ENCODE measurements at regions of chr2 and their contacts with region 1.

Region 1: GRCh38 chr2:59910166-59910565 is 643.3 kb downstream of the BCL11A start:
- DNase-seq: no peak
- ATAC-seq: no peak
- H3K4me3 ChIP-seq: no peak overlapping the region
- H3K4me3 Mint-ChIP-seq: peak overlapping the region in 2 of 10 donors; percentile 0 to 10
- H3K27ac ChIP-seq: no peak overlapping the region
- H3K27ac Mint-ChIP-seq: peak overlapping the region in 3 of 9 donors; percentile 2 to 23 (median 19)
- H3K4me1 ChIP-seq: no peaks in the 10 kb centered on the region
- H3K4me1 Mint-ChIP-seq: peaks cover 5 to 25% (median 22%) of the 10 kb centered on the region in 7 donors
- H3K27me3 ChIP-seq: no peaks in the 10 kb centered on the region
- H3K27me3 Mint-ChIP-seq: no peaks in the 10 kb centered on the region

Region 2: GRCh38 chr2:59899692-59900091 is 10.5 kb before region 1 on chr2:
- CTCF ChIA-PET with region 1: no interaction called
- POLR2A ChIA-PET with region 1: no interaction called
- intact Hi-C with region 1: loop called in 1 of 2 experiments (anchors 1 kb)
- DNase-seq: no peak
- ATAC-seq: no peak
- H3K4me3 ChIP-seq: no peak overlapping the region
- H3K4me3 Mint-ChIP-seq: no peak overlapping the region
- H3K27ac ChIP-seq: no peak overlapping the region
- H3K27ac Mint-ChIP-seq: peak overlapping the region in 1 of 9 donors; percentile 21
- H3K4me1 ChIP-seq: no peaks in the 10 kb centered on the region
- H3K4me1 Mint-ChIP-seq: peaks cover 0 to 12% (median 5%) of the 10 kb centered on the region in 7 donors
- H3K27me3 ChIP-seq: no peaks in the 10 kb centered on the region
- H3K27me3 Mint-ChIP-seq: peaks cover 0 to 2% (median 0%) of the 10 kb centered on the region in 5 donors